ENCODE measurements at regions of chr5 and their contacts with region 1.

Region 1: DNA sequence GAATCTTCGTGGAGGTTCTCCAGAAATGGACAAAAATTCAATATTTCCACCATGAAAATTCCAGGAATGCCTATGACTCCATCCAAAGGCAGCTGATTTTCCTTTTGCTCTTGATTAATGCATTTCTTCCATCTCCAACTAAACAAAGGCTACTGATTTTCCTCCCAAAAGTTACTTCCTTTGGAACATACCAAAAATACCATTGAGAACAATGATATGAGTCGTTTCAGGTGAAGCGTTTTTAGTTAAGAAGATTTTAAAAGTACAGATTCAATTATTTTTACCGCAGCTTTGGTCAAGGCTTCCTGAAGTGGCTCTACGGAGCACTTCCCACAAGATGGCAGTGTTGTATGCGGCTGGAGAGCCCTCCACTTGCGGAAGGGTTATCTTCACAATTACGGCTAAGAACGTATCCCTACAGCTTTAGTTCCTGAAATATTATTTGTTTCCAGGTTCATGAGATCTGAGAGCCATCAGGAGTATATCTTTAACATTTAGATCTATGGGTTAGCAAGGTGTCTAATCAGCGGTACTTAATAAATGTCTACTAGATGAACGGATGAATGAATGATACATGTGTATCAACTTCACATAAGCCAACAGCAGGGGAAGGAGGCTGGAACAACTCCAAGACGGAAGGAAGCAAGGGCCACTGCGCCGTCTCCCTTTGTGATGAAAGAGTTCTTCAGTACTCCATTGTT is 35.9 kb upstream of the ARSB start:
- DNase-seq: peak; percentile 41
- H3K4me3 ChIP-seq: peak overlapping the region; percentile 21; the same call in 1 of the 2 replicates
- CTCF ChIP-seq: peak; percentile 75

Region 2: DNA sequence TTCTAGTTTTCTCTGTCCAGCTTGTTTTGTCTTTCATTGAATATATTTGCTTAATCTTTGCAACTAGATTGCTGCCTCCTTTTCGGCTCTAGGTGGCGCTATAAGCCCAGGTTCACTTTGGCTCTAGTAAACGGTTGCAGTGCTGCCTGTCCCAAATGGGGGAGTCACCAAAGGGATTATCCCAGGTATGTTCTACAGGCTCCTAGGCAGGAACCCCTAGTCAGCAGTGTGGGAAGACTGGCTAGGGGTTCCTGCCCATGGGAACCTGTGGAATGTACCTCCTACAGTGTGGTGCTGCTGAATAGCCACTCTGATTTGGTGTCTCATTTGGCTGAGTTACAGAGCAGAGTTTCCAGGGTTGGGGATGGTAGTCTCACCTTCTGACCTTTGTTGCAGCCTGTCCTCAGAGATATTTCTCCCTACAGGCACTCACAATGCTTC is 121.1 kb before region 1 on chr5:
- CTCF ChIA-PET with region 1: interaction called, 110 read pairs
- POLR2A ChIA-PET with region 1: no interaction called
- DNase-seq: no peak
- H3K4me3 ChIP-seq: no peak overlapping the region
- CTCF ChIP-seq: peak; percentile 70

Region 3: GRCh38 chr5:79048437-79048836 is 27.4 kb after region 1 on chr5:
- CTCF ChIA-PET with region 1: interaction called, 61 read pairs
- POLR2A ChIA-PET with region 1: no interaction called
- DNase-seq: no peak
- H3K4me3 ChIP-seq: no peak overlapping the region
- CTCF ChIP-seq: no peak

Region 4: GRCh38 chr5:79107020-79107796 is 86.2 kb after region 1 on chr5:
- CTCF ChIA-PET with region 1: interaction called, 26 read pairs
- POLR2A ChIA-PET with region 1: no interaction called
- DNase-seq: no peak
- H3K4me3 ChIP-seq: no peak overlapping the region
- CTCF ChIP-seq: no peak

Region 5: DNA sequence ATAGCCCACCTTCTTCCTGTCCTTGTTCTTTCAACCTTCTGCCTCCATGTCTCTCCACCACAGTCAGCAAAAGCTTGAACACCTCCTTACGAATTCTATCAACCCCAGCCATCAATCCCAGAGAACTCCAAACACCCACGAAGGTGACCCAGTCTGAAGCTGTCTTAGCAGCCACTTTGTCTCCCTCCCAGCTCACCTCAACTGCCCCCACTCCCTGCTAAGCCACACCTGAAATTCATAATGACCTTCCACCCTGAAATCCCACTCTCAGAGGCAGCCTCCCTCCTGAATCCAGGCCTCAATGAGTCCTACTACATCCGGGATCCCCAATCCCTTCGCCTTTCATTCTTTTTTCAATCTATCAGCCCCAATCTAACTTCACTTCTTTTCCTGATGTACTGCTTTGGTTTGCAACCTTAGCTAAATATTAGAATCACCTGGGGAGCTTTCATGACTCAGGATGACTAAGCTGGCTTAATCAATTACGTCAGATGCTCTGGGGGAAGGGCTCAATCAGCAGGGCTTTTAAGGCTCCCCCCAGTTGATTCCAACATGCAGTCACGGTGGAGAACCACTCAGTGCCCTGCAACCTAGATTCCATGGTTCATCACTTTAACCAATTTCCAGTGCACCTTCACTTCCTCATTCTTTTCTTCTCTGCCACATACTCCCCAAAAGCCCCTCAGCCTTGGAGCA is 122.8 kb after region 1 on chr5:
- CTCF ChIA-PET with region 1: interaction called, 22 read pairs
- POLR2A ChIA-PET with region 1: no interaction called
- DNase-seq: no peak
- H3K4me3 ChIP-seq: no peak overlapping the region
- CTCF ChIP-seq: no peak

Region 6: DNA sequence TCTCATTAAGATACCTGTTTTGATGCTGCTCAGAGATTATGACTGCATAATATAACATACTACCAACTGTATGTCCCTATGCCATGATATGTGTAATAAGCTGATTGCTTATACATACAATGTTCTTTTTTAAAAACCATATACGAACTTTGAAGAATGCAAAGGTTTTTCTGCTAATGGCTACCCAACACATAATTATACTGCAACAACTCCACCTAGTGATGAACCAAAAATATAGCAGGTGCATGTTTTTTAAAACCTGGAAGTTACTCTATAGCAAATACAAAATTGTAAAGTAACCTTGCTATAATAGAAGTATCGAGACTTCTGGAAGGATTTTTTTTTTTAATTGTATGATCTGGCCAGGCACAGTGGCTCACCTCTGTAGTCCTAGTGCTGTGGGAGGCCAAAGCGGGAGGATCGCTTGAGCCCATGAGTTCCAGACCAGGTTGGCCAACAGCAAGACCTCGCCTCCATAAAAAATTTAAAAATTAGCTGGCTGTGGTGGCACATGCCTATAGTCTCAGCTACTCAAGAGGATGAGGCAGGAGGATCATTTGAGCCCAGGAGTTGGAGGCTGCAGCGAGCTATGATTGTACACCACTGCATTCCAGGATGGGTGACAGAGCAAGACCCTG is 443.8 kb after region 1 on chr5:
- CTCF ChIA-PET with region 1: interaction called, 178 read pairs
- POLR2A ChIA-PET with region 1: no interaction called
- DNase-seq: no peak
- H3K4me3 ChIP-seq: no peak overlapping the region
- CTCF ChIP-seq: peak; percentile 15

Region 7: GRCh38 chr5:79857714-79858409 is 836.9 kb after region 1 on chr5:
- CTCF ChIA-PET with region 1: interaction called, 15 read pairs
- POLR2A ChIA-PET with region 1: no interaction called
- DNase-seq: no peak
- H3K4me3 ChIP-seq: no peak overlapping the region
- CTCF ChIP-seq: peak; percentile 86